Natural killer cell (primary cell): ENCODE measurements at regions of chr6 and their contacts with region 1.

Region 1: GRCh38 chr6:26249957-26250697 is 114.9 kb upstream of the BTN3A2 start:
- DNase-seq: peak; percentile 62 to 89
- ATAC-seq: peak; percentile 64 to 79 (median 68)
- H3K4me3 ChIP-seq: peak overlapping the region; percentile 74
- H3K4me3 Mint-ChIP-seq: peak overlapping the region; percentile 98
- H3K27ac ChIP-seq: peak overlapping the region; percentile 70
- H3K27ac Mint-ChIP-seq: peak overlapping the region; percentile 96 to 97
- H3K4me1 ChIP-seq: peaks cover 16% of the 10 kb centered on the region
- H3K4me1 Mint-ChIP-seq: peaks cover 39 to 40% of the 10 kb centered on the region in 2 donors
- H3K27me3 ChIP-seq: no peaks in the 10 kb centered on the region
- H3K27me3 Mint-ChIP-seq: no peaks in the 10 kb centered on the region
- CTCF ChIP-seq: peak; percentile 44

Region 2: GRCh38 chr6:26103770-26104456 is 146.2 kb before region 1 on chr6:
- intact Hi-C with region 1: no loop called
- DNase-seq: peak; percentile 86 to 95
- ATAC-seq: peak; percentile 87 to 96 (median 88)
- H3K4me3 ChIP-seq: peak overlapping the region; percentile 41
- H3K4me3 Mint-ChIP-seq: peak overlapping the region; percentile 90
- H3K27ac ChIP-seq: peak overlapping the region; percentile 84
- H3K27ac Mint-ChIP-seq: peak overlapping the region; percentile 98 to 99
- H3K4me1 ChIP-seq: peaks cover 10% of the 10 kb centered on the region
- H3K4me1 Mint-ChIP-seq: peaks cover 18% of the 10 kb centered on the region in 2 donors
- H3K27me3 ChIP-seq: no peaks in the 10 kb centered on the region
- H3K27me3 Mint-ChIP-seq: no peaks in the 10 kb centered on the region
- CTCF ChIP-seq: peak; percentile 41

Region 3: DNA sequence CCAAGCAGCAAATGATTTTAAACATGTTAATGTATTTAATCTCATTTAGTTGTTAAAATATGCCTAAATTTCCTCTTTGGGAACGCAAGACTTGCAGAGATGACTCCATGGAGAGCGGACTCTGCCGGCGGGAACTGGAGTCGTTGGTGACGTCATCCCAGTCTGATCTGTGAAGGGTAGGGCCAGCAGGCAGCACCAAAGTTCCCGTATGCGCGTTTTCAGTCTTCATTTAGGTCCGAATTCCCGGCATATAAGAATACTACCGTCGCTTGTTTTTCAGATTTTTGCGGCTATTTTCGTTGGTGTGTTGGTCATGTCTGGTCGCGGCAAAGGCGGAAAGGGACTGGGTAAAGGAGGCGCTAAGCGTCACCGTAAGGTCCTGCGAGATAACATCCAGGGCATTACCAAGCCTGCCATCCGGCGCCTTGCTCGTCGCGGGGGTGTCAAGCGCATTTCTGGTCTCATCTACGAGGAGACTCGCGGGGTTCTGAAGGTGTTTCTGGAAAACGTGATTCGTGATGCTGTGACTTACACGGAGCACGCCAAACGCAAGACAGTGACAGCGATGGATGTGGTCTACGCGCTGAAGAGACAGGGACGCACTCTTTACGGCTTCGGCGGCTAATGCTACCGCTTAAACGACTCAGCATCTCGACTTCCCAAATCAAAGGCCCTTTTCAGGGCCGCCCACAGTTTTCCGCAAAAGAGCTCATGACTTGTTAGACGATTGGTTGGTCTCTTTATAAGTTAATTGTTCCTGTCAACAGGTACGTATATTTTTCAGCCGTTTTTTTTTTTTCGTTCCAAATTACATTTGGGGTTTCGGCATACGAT is 45.6 kb before region 1 on chr6:
- intact Hi-C with region 1: loop called (anchors 2 kb)
- DNase-seq: peak; percentile 78 to 97
- ATAC-seq: peak; percentile 63 to 81 (median 69)
- H3K4me3 ChIP-seq: peak overlapping the region; percentile 81
- H3K4me3 Mint-ChIP-seq: no peak overlapping the region
- H3K27ac ChIP-seq: peak overlapping the region; percentile 96
- H3K27ac Mint-ChIP-seq: no peak overlapping the region
- H3K4me1 ChIP-seq: peaks cover 25% of the 10 kb centered on the region
- H3K4me1 Mint-ChIP-seq: peaks cover 13 to 19% of the 10 kb centered on the region in 2 donors
- H3K27me3 ChIP-seq: no peaks in the 10 kb centered on the region
- H3K27me3 Mint-ChIP-seq: no peaks in the 10 kb centered on the region
- CTCF ChIP-seq: peak; percentile 23